Mammary epithelial cell (primary cell): ENCODE measurements at regions of chr15 and their contacts with region 1.

Region 1: GRCh38 chr15:43800286-43801141 is at the start of gene HYPK:
- DNase-seq: peak; percentile 77
- H3K4me3 ChIP-seq: peak within 1 kb of the TSS; percentile 77 to 90 (median 83)
- H3K27ac ChIP-seq: peak within 1 kb of the TSS; percentile 58
- H3K4me1 ChIP-seq: peaks cover 26% of the 10 kb centered on the region
- H3K27me3 ChIP-seq: no peaks in the 10 kb centered on the region
- CTCF ChIP-seq: no peak
- total RNA-seq, gene HYPK: 5.5 to 20.2 TPM

Region 2: DNA sequence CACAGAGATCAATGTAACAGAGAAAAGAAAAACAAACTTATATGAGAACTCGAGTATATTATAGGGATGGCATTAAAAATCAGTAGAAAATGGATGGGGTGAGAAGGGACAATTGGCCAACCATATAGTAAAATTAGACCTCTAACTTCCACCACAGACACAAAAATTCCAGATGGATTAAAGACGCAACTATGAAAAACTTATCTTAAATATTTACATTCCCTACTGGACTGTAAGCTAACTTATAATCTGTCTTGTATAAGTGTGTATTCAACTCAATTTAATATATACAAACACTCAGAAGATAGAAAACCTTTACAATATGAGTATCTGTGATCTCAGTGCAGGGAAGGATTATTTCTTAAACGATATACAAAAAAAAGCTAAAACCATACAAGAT is 21.0 kb after region 1 on chr15:
- CTCF ChIA-PET with region 1: interaction called, 16 read pairs
- dilution Hi-C with region 1: no loop called
- in situ Hi-C with region 1: no loop called
- intact Hi-C with region 1: no loop called
- DNase-seq: no peak
- H3K4me3 ChIP-seq: no peak overlapping the region
- H3K27ac ChIP-seq: no peak overlapping the region
- H3K4me1 ChIP-seq: peaks cover 4% of the 10 kb centered on the region
- H3K27me3 ChIP-seq: no peaks in the 10 kb centered on the region
- CTCF ChIP-seq: no peak